Common myeloid progenitor, CD34-positive (primary cell): ENCODE measurements at regions of chr17 and their contacts with region 1.

Region 1: GRCh38 chr17:20009302-20010098 is at the start of gene SPECC1:
- DNase-seq: peak; percentile 78 to 87 (median 85)
- H3K4me3 ChIP-seq: peak within 1 kb of the TSS; percentile 57 to 95 (median 79)
- H3K27ac ChIP-seq: peak within 1 kb of the TSS in 1 of 2 experiments; percentile 43
- H3K4me1 ChIP-seq: peaks cover 0 to 21% (median 13%) of the 10 kb centered on the region in 4 experiments
- H3K27me3 ChIP-seq: peaks cover 0 to 5% (median 4%) of the 10 kb centered on the region in 5 experiments

Region 2: DNA sequence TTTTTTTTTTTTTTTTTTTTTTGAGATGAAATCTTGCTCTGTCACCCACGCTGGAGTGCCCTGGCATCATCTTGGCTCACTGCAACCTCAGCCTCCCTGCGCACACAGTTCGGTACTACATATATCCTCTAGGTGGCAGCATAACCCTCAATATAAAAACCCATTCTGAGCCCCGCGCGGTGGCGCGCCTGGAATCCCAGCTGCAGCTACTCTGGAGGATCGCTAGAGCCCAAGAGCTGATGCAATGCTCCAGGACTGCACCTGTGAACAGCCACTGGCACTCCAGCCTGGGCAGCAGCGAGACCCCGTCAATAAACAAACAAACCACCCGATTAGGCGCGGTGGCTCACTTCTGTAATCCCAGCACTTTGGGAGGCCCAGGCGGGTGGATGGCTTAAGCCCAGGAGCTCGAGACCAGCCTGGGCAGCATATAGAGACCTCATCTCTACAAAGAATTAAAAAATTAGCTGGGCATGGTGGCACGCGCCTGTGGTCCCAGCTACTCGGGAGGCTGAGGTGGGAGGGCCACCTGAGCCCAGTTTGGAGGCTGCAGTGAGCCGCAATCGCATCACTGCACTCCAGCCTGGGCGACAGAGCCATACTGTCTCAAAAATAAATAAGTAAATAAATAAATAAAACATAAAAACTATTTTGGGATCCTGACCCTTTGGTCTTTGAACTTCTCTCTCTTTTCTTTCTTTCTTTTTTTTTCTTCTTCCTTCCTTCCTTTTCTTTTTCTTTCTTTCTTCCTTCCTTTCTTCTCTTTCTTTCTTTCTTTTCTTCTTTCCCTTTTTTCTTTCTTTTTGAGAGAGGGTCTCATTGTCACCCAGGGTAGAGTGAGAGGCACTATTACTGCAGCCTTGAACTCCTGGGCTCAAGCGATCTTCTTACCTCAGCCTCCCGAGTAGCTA is 16.4 kb before region 1 on chr17:
- CTCF ChIA-PET with region 1: interaction called, 19 read pairs
- POLR2A ChIA-PET with region 1: interaction called, 4 read pairs
- DNase-seq: peak; percentile 92 to 95 (median 94)
- H3K4me3 ChIP-seq: peak overlapping the region in 4 of 7 experiments; percentile 19 to 48 (median 36)
- H3K27ac ChIP-seq: no peak overlapping the region
- H3K4me1 ChIP-seq: peaks cover 0 to 15% (median 8%) of the 10 kb centered on the region in 4 experiments
- H3K27me3 ChIP-seq: no peaks in the 10 kb centered on the region

Region 3: GRCh38 chr17:20074489-20074888 is 65.0 kb after region 1 on chr17:
- CTCF ChIA-PET with region 1: interaction called, 10 read pairs
- POLR2A ChIA-PET with region 1: interaction called, 3 read pairs
- DNase-seq: no peak
- H3K4me3 ChIP-seq: peak overlapping the region in 6 of 7 experiments; percentile 64 to 87 (median 72)
- H3K27ac ChIP-seq: peak overlapping the region in 1 of 2 experiments; percentile 61
- H3K4me1 ChIP-seq: peaks cover 36 to 71% (median 46%) of the 10 kb centered on the region in 4 experiments
- H3K27me3 ChIP-seq: no peaks in the 10 kb centered on the region